Common myeloid progenitor, CD34-positive (primary cell): ENCODE measurements at regions of chr6 and their contacts with region 1.

Region 1: DNA sequence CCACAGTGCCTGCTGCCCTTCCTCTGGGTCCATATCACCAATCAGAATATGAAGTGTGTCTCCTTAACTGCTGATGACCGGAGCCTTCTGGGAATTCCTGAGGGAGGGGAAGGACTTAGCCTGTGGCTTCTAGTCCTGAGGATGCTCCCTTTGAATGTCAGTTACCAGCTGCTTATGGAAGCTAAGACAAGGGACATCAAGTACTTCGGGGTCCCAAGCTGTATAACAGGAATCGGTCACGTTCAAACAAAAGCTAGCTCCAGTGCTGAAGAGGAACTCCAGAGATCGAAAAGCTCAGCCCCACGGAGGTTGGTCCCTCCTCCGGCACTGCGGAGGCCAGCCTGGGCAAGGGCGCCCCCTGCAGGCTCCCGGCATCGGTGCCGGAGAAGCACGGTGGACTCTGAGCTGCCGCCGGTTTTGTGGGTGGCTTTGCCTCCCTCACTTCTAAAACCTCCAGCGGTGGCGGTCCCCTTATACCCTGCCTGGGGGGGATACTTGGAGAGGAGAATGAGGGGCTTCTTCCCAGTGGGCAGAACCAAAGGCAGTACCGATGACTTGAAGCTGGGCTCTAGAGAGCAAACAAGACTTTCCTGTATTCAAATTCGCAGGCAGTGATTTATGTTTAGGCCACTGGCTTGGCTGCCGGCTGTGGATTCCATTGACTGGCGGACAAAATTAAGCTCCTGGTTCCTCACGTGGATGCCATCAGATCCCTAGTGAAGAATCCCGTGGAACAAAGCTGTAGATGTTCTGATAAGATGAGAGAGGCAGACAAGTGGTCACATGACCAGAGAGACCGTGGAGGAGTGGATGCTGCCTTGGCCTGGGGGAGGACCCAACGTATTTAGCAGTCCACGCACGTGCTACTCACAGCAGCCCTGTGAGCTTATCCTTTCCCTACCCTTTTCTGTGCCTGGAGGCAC is 16.2 kb upstream of the UBR2 start:
- DNase-seq: peak; percentile 81 to 91 (median 90)
- H3K4me3 ChIP-seq: peak overlapping the region in 6 of 7 experiments; percentile 65 to 85 (median 70)
- H3K27ac ChIP-seq: peak overlapping the region; percentile 13 to 67
- H3K4me1 ChIP-seq: peaks cover 2 to 12% (median 8%) of the 10 kb centered on the region in 4 experiments
- H3K27me3 ChIP-seq: peaks cover 0 to 2% (median 0%) of the 10 kb centered on the region in 5 experiments

Region 2: GRCh38 chr6:42260972-42261371 is 286.7 kb before region 1 on chr6:
- CTCF ChIA-PET with region 1: interaction called, 21 read pairs
- POLR2A ChIA-PET with region 1: no interaction called
- DNase-seq: peak; percentile 22 to 42 (median 37)
- H3K4me3 ChIP-seq: no peak overlapping the region
- H3K27ac ChIP-seq: no peak overlapping the region
- H3K4me1 ChIP-seq: no peaks in the 10 kb centered on the region
- H3K27me3 ChIP-seq: no peaks in the 10 kb centered on the region

Region 3: GRCh38 chr6:42511803-42512422 is 35.8 kb before region 1 on chr6:
- CTCF ChIA-PET with region 1: interaction called, 10 read pairs
- POLR2A ChIA-PET with region 1: no interaction called
- DNase-seq: no peak
- H3K4me3 ChIP-seq: no peak overlapping the region
- H3K27ac ChIP-seq: no peak overlapping the region
- H3K4me1 ChIP-seq: no peaks in the 10 kb centered on the region
- H3K27me3 ChIP-seq: no peaks in the 10 kb centered on the region

Region 4: GRCh38 chr6:42537536-42537935 is 10.1 kb before region 1 on chr6:
- CTCF ChIA-PET with region 1: interaction called, 22 read pairs
- POLR2A ChIA-PET with region 1: interaction called, 3 read pairs
- DNase-seq: no peak
- H3K4me3 ChIP-seq: no peak overlapping the region
- H3K27ac ChIP-seq: no peak overlapping the region
- H3K4me1 ChIP-seq: no peaks in the 10 kb centered on the region
- H3K27me3 ChIP-seq: no peaks in the 10 kb centered on the region